CD8-positive, alpha-beta T cell (primary cell): ENCODE measurements at regions of chr17 and their contacts with region 1.

Region 1: GRCh38 chr17:42027961-42028790 is 8.3 kb downstream of the NKIRAS2 start:
- DNase-seq: no peak
- ATAC-seq: no peak
- H3K4me3 ChIP-seq: no peak overlapping the region
- H3K4me3 Mint-ChIP-seq: no peak overlapping the region
- H3K27ac ChIP-seq: no peak overlapping the region
- H3K27ac Mint-ChIP-seq: no peak overlapping the region
- H3K4me1 ChIP-seq: peaks cover 6% of the 10 kb centered on the region
- H3K4me1 Mint-ChIP-seq: peaks cover 5% of the 10 kb centered on the region
- H3K27me3 ChIP-seq: peaks cover 0 to 5% of the 10 kb centered on the region in 2 experiments
- H3K27me3 Mint-ChIP-seq: peaks cover 10% of the 10 kb centered on the region
- CTCF ChIP-seq: no peak

Region 2: GRCh38 chr17:42101513-42102319 is 73.5 kb after region 1 on chr17:
- CTCF ChIA-PET with region 1: interaction called, 19 read pairs
- POLR2A ChIA-PET with region 1: no interaction called
- intact Hi-C with region 1: loop called in 1 of 2 experiments (anchors 1 kb)
- DNase-seq: peak in 8 of 9 experiments; percentile 47 to 73 (median 66)
- ATAC-seq: peak; percentile 52
- H3K4me3 ChIP-seq: no peak overlapping the region
- H3K4me3 Mint-ChIP-seq: no peak overlapping the region
- H3K27ac ChIP-seq: no peak overlapping the region
- H3K27ac Mint-ChIP-seq: no peak overlapping the region
- H3K4me1 ChIP-seq: peaks cover 9% of the 10 kb centered on the region
- H3K4me1 Mint-ChIP-seq: peaks cover 8% of the 10 kb centered on the region
- H3K27me3 ChIP-seq: no peaks in the 10 kb centered on the region
- H3K27me3 Mint-ChIP-seq: peaks cover 5% of the 10 kb centered on the region
- CTCF ChIP-seq: peak; percentile 76